ENCODE measurements at regions of chrX and their contacts with region 1.

Region 1: DNA sequence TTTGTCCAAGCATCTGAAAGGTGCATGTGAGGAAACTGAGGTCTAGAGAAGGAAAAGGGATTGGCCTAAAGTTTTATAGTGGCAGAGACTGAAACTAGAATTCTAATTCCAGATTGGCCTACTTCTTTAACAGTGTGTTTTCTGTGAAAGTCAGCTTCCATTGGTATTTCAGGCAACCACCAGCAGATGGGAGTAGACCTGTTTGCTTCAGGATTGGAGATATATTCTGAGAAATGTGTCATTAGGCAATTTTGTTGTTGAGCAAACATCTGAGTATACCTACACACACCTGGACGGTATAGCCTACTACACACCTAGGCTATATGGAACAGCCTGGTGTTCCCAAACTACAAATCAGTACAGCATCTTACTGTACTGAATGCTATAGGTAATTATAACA is 207.3 kb upstream of the RADX start:
- DNase-seq: no peak
- CTCF ChIP-seq: no peak

Region 2: DNA sequence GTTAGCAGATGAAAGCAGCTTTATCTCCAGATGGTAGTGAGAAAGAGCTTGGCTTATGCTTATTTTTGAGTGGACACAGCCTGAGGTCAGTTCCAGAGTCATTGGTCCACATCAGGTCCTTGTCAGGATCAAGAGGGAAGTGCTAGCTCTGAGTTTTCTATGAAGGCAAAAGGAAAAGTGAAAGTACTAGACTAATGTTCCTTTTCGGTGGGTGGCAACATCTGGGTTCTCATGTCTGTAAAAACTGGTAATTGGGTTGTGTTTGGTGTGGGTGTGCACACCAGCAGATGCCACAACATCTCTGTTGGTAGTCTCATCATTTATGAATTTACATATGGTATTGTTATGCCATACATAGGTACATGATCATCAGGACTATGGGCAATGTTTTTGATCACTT is 25.9 kb before region 1 on chrX:
- CTCF ChIA-PET with region 1: no interaction called
- POLR2A ChIA-PET with region 1: no interaction called
- DNase-seq: no peak
- CTCF ChIP-seq: no peak

Region 3: GRCh38 chrX:106391284-106391911 is 13.1 kb before region 1 on chrX:
- CTCF ChIA-PET with region 1: no interaction called
- POLR2A ChIA-PET with region 1: no interaction called
- DNase-seq: no peak
- CTCF ChIP-seq: no peak

Region 4: DNA sequence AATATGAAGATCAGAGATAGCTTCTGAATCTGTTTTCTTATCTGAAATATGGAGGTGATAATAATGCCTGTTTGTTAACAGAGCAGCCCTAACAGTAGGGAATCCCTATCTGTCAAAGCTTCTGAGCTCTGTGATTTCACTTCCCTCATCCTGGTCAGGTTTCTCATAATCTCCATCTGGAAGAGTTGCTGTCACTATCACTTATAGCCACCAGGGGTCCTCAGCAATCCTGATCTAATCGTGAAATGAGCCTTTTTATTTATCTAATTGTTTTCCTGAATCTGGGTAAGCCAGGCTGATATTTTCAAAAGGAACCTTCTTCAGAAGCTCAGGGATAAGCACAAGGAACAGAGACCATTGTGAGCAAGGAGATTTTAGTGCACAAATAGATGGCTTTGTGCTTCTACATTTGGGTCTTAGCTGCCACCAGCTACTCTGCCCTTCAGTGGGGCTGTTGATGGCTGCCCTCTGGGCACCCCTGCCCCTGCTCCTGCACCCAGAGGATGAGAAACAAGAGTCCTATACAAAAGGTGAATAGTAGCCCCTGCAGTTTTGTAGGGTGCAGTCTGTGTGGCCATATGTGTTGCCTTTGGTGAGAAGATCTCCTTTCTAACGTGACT is 10.9 kb after region 1 on chrX:
- CTCF ChIA-PET with region 1: interaction called, 27 read pairs
- POLR2A ChIA-PET with region 1: no interaction called
- DNase-seq: peak; percentile 21
- CTCF ChIP-seq: peak; percentile 42